ENCODE measurements at regions of chr2 and their contacts with region 1.

Region 1: DNA sequence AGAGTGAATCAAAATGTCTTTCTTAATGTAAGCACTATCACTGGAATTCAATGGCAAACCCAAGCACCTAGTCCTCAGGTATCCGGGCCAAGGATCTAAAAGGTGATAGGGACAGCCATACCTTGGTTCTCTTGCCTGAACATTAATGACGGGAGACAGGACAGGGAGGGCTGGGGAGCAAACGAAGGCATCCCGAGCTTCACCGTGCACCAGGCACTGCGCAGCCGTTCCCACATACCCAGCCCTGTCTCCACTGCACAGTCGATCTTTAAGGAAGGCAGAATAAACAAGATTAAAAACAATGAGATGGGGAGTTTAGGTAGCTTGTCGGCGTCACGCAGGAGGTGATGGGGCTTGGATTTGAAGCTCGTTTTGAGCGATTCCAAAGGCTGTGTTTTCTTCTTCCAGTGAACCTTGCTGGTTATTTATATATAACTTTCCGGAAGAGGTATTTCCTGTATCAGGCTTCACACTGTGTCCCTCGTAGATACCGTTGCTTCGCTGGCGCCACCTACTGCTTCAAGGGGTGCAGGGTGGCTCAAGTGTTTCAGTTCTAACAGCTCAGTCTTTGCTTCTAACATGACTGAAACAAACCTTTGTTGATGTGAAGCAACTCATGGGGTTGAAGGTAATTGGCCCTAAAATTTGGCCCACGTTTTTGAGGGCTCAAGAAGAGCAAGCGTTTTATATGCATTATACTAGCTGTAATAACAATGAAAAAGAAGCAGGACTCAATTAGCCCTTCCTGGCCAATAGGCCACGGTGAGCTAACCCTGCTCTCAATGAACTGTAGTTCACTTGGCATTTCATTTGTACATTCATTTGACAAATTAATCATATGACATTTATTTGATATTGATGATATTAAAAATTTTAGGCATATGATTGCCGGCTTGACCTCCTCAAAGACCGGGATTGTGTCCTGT is 77.4 kb downstream of the DCDC2C start:
- DNase-seq: peak; percentile 86
- ATAC-seq: peak; percentile 100
- H3K4me3 Mint-ChIP-seq: peak overlapping the region; percentile 29
- H3K27ac Mint-ChIP-seq: peak overlapping the region; percentile 45
- H3K4me1 Mint-ChIP-seq: peaks cover 11% of the 10 kb centered on the region
- H3K27me3 Mint-ChIP-seq: peaks cover 29% of the 10 kb centered on the region

Region 2: GRCh38 chr2:3728104-3729054 is 52.4 kb before region 1 on chr2:
- CTCF ChIA-PET with region 1: interaction called, 50 read pairs
- POLR2A ChIA-PET with region 1: no interaction called
- intact Hi-C with region 1: loop called (anchors 1 to 2 kb)
- DNase-seq: no peak
- ATAC-seq: no peak
- H3K4me3 Mint-ChIP-seq: no peak overlapping the region
- H3K27ac Mint-ChIP-seq: no peak overlapping the region
- H3K4me1 Mint-ChIP-seq: no peaks in the 10 kb centered on the region
- H3K27me3 Mint-ChIP-seq: peaks cover 2% of the 10 kb centered on the region

Region 3: DNA sequence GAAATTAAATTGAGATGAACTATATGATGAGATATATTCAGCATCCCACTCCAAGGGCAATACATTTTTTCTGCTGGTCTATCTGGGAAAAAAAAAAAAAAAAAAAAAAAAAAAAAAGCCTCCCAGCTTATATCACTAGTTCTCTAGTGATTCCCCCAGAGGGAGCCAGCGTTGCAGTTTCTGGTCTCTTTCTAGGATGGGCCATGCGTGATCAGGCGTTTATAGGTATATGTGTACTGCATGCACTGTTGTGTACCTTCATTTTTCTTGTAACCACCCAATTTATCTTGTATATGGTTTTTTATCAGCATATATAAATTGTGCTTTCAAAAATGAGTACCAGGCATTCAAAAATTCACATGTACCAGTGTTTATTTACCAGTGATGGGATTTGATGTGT is 42.3 kb before region 1 on chr2:
- CTCF ChIA-PET with region 1: no interaction called
- POLR2A ChIA-PET with region 1: no interaction called
- intact Hi-C with region 1: loop called in 1 of 2 experiments (anchors 2 kb)
- DNase-seq: peak; percentile 49
- ATAC-seq: no peak
- H3K4me3 Mint-ChIP-seq: no peak overlapping the region
- H3K27ac Mint-ChIP-seq: no peak overlapping the region
- H3K4me1 Mint-ChIP-seq: no peaks in the 10 kb centered on the region
- H3K27me3 Mint-ChIP-seq: peaks cover 11% of the 10 kb centered on the region

Region 4: DNA sequence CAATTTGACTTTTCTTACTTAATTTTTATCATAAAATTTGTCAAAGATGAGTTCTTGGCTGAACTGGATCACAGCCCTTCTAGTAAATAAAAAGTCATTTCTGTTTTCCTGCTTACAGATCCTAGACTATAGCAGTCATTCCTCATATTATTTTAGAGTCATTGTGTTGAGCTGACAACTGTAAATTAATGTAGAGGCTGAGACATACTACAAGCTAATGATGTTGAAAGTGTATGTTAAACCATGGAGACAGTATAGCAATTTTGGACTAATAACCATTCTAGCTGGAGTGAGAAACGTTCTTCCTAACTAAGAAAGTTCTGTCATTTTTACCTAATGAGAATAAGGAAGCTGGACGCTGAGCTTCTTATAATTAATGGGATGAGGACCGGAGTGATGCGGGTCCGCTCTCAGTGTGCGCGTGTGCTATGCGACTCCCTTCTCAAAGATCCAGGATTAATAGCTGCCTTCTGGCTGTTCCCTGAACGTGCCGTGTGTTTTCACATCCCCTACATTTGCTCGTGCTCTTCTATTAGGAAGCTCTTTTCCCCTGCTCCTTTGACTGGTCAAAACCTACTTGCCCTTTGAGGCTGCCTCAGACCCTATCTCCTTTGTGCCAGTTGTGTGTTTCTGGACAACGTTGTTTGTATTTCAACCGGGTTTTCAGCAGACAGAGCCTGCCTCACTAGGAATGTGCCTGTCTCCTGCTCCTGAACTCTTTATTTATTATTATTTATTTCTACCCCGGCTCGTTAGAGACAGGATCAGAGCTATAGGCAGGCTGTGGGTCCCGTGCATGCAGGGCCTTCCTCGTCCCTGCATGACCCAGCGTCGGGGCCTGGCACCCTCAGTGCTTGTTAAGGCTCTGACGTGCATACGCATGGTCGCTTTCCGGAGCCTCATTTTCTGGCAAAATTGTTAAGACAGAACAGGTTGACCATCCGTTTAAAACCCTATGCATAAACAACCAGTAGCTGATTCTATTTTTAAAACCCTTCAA is 105.2 kb after region 1 on chr2:
- CTCF ChIA-PET with region 1: no interaction called
- POLR2A ChIA-PET with region 1: no interaction called
- intact Hi-C with region 1: no loop called
- DNase-seq: no peak
- ATAC-seq: no peak
- H3K4me3 Mint-ChIP-seq: no peak overlapping the region
- H3K27ac Mint-ChIP-seq: no peak overlapping the region
- H3K4me1 Mint-ChIP-seq: no peaks in the 10 kb centered on the region
- H3K27me3 Mint-ChIP-seq: no peaks in the 10 kb centered on the region

Region 5: DNA sequence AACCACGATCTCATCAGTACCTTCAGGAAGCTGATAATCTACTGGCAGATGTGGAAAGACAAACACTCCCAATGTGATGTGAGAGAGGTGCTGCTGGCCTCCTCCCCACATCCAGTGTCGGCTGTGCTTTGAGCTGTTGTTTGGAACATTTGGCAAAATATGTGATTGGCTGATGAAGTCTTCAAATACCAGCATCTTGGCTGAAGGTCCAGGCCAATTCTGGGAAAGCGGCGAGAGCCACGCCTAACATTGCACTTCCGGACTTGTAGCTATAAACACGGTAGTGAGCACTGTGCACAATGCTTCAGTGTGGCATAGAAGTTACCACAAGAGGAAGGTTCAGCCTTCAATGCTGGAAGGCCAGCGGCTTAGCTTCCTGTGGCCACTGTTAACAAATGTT is 121.4 kb after region 1 on chr2:
- CTCF ChIA-PET with region 1: no interaction called
- POLR2A ChIA-PET with region 1: no interaction called
- intact Hi-C with region 1: no loop called
- DNase-seq: no peak
- ATAC-seq: no peak
- H3K4me3 Mint-ChIP-seq: no peak overlapping the region
- H3K27ac Mint-ChIP-seq: no peak overlapping the region
- H3K4me1 Mint-ChIP-seq: no peaks in the 10 kb centered on the region
- H3K27me3 Mint-ChIP-seq: peaks cover 4% of the 10 kb centered on the region

Measured in activated CD4-positive, alpha-beta T cell treated with anti-CD3 and anti-CD28 coated beads for 36 hours (primary cell).